A549 (cell line): ENCODE measurements at regions of chr1 and their contacts with region 1.

Region 1: DNA sequence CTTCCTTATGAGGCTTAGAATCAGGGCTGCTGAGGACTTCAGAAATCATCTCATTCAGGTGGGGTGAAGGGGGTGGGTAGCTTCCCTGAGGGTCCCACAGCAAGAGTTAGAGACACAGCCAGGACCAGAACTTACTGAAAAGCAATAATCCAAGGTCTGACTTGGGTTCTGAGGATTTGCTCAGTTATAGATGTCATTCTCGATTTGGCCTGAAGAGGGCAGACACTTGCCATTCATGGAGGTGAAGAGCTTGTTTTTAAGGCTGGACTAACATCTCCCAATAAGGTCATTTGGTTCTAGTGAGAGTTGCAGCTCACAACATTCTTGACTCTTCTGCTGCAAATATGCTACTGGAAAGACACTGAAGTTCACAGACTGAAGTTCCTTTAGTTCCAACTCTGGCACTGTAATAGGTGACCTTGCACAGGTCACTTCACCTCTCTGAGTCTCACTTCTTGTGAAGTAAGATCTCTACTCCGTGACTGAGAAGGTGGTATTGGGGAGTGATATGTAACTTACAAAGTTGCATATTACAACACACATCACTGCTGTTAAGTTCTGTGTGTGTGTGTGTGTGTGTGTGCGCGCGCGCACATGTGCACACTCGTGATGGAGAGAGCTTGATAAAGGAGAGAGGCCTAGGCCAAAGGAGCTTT is 69.8 kb upstream of the DIRAS3 start:
- DNase-seq: peak; percentile 31 to 66
- ATAC-seq: peak; percentile 67 to 84; a peak in 4 of 6 replicates
- H3K4me3 ChIP-seq: no peak overlapping the region
- H3K27ac ChIP-seq: no peak overlapping the region
- H3K4me1 ChIP-seq: peaks cover 6% of the 10 kb centered on the region
- CTCF ChIP-seq: peak; percentile 71
- EP300 ChIP-seq: no peak
- POLR2A ChIP-seq: no peak
- RAD21 ChIP-seq: peak; percentile 85 to 86

Region 2: DNA sequence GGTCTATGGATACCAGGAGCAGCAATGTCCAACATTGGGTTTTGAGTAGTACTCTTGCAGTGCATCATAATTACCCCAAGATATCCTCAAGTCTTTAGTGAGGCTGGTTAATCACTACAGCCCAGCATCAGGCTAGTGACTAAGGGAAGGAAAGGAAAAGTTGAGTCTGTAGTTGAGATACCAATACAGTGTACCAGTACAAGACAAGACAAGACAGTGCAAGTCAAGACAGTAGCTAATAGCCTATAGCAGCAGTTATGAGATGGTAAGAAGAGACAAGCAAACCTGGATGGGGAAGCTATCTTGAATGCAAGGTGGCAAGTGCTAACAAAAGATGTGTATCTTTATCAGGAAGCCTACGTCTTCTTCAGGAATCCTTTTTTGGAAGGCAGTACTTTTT is 273.7 kb before region 1 on chr1:
- CTCF ChIA-PET with region 1: interaction called, 177 read pairs
- POLR2A ChIA-PET with region 1: no interaction called
- DNase-seq: no peak
- ATAC-seq: no peak
- H3K4me3 ChIP-seq: no peak overlapping the region
- H3K27ac ChIP-seq: peak overlapping the region in 1 of 2 experiments; percentile 56; a peak in 2 of 6 replicates
- H3K4me1 ChIP-seq: peaks cover 20% of the 10 kb centered on the region
- CTCF ChIP-seq: no peak
- EP300 ChIP-seq: no peak
- POLR2A ChIP-seq: no peak
- RAD21 ChIP-seq: no peak

Region 3: GRCh38 chr1:67853704-67854103 is 266.6 kb before region 1 on chr1:
- CTCF ChIA-PET with region 1: interaction called, 177 read pairs
- POLR2A ChIA-PET with region 1: no interaction called
- DNase-seq: peak; percentile 59 to 83
- ATAC-seq: peak; percentile 76 to 86
- H3K4me3 ChIP-seq: no peak overlapping the region
- H3K27ac ChIP-seq: peak overlapping the region; percentile 35 to 88
- H3K4me1 ChIP-seq: peaks cover 26% of the 10 kb centered on the region
- CTCF ChIP-seq: peak; percentile 71
- EP300 ChIP-seq: no peak
- POLR2A ChIP-seq: no peak
- RAD21 ChIP-seq: peak; percentile 95 to 97

Region 4: GRCh38 chr1:68103884-68104554 is 16.2 kb before region 1 on chr1:
- CTCF ChIA-PET with region 1: interaction called, 12 read pairs
- POLR2A ChIA-PET with region 1: no interaction called
- DNase-seq: no peak
- ATAC-seq: no peak
- H3K4me3 ChIP-seq: no peak overlapping the region
- H3K27ac ChIP-seq: peak overlapping the region in 1 of 2 experiments; percentile 74; a peak in 3 of 6 replicates
- H3K4me1 ChIP-seq: peaks cover 10% of the 10 kb centered on the region; the same call in 2 of the 3 replicates
- CTCF ChIP-seq: no peak
- EP300 ChIP-seq: no peak
- POLR2A ChIP-seq: no peak
- RAD21 ChIP-seq: no peak

Region 5: GRCh38 chr1:68321084-68321685 is 200.9 kb after region 1 on chr1:
- CTCF ChIA-PET with region 1: interaction called, 191 read pairs
- POLR2A ChIA-PET with region 1: interaction called, 6 read pairs
- DNase-seq: peak; percentile 55 to 61
- ATAC-seq: peak; percentile 99 to 100
- H3K4me3 ChIP-seq: no peak overlapping the region
- H3K27ac ChIP-seq: no peak overlapping the region
- H3K4me1 ChIP-seq: 0 out of 3 replicates have a peak, but pooled peaks cover 5% of the 10 kb centered on the region
- CTCF ChIP-seq: peak; percentile 69
- EP300 ChIP-seq: no peak
- POLR2A ChIP-seq: no peak
- RAD21 ChIP-seq: peak; percentile 67

Region 6: DNA sequence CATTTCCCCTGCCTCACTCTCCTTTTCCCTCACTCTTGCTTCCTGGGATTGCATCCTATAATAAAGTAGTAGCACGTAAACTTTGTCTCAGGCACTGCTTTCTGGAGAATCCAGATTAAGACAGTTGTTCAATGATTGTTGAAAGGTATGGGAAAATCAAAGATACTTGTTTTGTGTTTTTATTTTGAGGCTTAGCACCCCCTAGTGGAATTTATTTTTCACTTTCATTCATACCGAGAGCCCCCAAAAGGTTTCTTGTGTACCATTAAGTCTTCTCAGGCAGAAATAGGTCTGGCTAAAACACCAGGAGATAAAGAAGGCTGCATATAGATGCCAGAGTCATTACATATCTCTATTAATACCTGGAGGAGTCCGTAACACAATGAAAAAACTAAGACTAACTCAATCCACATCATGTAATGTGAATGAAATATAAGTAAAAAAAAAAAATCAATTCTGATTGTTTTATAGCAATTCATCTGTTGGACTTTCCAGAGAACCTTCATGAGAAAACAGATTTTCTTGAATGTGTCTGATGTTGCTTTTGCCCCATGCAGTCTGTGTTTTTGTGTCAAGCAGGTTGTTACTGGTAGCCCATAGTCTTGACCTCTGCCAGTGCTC is 226.0 kb after region 1 on chr1:
- CTCF ChIA-PET with region 1: interaction called, 34 read pairs
- POLR2A ChIA-PET with region 1: interaction called, 3 read pairs
- DNase-seq: peak; percentile 5 to 15
- ATAC-seq: no peak
- H3K4me3 ChIP-seq: no peak overlapping the region
- H3K27ac ChIP-seq: no peak overlapping the region
- H3K4me1 ChIP-seq: no peaks in the 10 kb centered on the region
- CTCF ChIP-seq: peak; percentile 47
- EP300 ChIP-seq: no peak
- POLR2A ChIP-seq: no peak
- RAD21 ChIP-seq: peak; percentile 15 to 40; a peak in 1 of 5 replicates

Region 7: DNA sequence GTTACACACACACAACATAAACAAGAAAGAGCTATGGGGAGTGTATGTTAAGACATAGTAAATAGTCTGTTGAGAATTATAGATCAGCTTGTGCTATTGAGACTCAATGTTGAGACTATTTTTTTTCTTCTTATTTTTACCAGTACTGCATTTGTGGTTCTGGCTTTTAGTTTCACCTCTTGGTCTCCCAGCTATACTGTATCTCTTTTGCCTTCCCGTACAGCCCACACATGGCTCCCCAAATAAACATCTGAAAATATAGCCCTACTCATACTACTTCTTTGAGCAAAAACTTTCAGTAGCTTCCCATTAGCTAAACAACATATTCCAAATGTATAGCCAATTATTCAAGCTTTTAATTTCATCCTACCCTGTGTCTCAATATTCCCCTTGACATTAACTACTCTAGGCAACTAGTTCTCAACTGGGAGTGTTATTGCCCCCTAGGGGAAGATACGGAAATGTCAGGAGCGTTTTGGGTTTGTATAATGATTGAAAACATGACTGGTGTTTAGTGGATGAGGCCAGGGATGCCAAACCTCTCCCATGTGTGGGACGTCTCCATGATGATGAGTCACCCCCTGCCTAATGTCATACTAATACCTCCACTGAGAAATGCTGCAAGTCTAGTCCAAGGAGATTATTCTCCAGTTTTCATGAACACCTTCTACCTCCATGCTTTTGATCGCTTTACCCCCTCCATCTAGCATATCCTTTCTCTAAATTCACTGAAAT is 322.7 kb after region 1 on chr1:
- CTCF ChIA-PET with region 1: interaction called, 18 read pairs
- POLR2A ChIA-PET with region 1: no interaction called
- DNase-seq: peak; percentile 31 to 41
- ATAC-seq: peak; percentile 66 to 86
- H3K4me3 ChIP-seq: no peak overlapping the region
- H3K27ac ChIP-seq: no peak overlapping the region
- H3K4me1 ChIP-seq: no peaks in the 10 kb centered on the region
- CTCF ChIP-seq: peak; percentile 51
- EP300 ChIP-seq: no peak
- POLR2A ChIP-seq: no peak
- RAD21 ChIP-seq: peak; percentile 45 to 52